ENCODE measurements at regions of chr19 and their contacts with region 1.

Region 1: DNA sequence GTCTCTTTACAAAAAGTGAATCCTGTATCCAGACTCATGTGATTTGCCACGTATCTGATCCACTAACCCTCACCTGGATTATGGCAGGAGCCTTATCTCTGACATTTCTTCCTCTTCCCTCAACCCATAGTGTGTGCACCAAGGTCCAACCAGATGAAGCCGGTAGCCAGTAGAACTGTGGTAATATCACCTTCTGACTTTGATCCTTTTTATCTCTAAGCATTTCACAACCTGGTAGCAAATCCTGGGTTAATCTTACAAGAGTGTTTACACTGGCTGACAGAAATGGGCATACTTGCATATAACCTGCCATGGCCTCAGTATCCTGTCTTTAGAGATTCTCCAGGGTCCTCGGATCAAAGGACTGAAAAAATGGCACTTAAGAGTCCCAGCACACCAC is 1.9 kb downstream of the ZNF417 start:
- DNase-seq: no peak
- ATAC-seq: no peak
- H3K4me3 ChIP-seq: peak overlapping the region; percentile 43
- H3K4me3 Mint-ChIP-seq: peak overlapping the region; percentile 93 to 99 (median 97)
- H3K27ac ChIP-seq: no peak overlapping the region
- H3K27ac Mint-ChIP-seq: peak overlapping the region in 5 of 9 donors; percentile 6 to 73 (median 47)
- H3K4me1 ChIP-seq: peaks cover 9 to 10% of the 10 kb centered on the region in 2 donors
- H3K4me1 Mint-ChIP-seq: peaks cover 21 to 39% (median 36%) of the 10 kb centered on the region in 7 donors
- H3K27me3 ChIP-seq: no peaks in the 10 kb centered on the region
- H3K27me3 Mint-ChIP-seq: no peaks in the 10 kb centered on the region

Region 2: DNA sequence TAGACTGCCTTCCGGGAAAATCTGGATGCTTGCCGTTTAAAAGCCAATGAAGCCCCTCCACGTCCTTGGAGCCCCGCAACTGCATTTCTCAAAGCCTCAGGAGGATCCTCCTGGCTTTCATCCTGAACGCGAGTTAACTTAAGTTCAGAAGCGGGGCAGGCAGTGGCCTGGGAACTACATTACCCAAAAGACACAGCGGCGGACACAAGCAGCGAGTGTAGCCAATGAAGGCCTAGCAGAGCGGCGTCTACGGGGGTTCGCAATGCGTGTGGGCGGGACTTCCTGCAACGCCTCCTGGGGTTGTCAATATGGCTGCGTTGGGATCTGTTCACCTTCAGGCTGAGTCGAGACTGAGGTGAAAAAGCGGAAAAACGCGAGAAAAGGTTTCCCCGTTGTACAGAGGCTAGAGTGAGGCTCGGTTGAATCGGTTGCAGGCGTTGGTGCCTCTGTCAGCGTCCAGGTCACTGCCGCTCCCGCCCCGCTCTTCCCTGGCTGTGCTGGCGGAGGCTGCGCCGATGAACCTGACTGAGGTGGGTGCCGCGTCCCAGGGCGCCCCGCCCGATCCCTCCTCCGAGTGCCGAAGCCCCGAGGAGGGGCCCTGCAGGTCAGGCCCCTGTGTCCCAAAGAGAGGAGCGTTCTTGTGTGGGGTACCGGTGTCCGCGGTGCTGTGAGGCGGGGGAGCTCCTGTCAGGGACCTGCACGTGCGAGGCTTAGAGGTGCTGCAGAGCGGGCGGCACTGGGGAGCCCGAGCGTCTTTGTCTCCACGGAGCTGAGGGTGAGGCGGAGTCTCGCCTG is 503.5 kb before region 1 on chr19 and contains the start of gene ZNF17:
- CTCF ChIA-PET with region 1: no interaction called
- POLR2A ChIA-PET with region 1: no interaction called
- intact Hi-C with region 1: loop called in 1 of 2 experiments (anchors 1 kb)
- DNase-seq: peak; percentile 72 to 95 (median 88)
- ATAC-seq: peak; percentile 100
- H3K4me3 ChIP-seq: peak within 1 kb of the TSS; percentile 80
- H3K4me3 Mint-ChIP-seq: peak within 1 kb of the TSS; percentile 85 to 97 (median 96)
- H3K27ac ChIP-seq: peak within 1 kb of the TSS; percentile 80
- H3K27ac Mint-ChIP-seq: peak within 1 kb of the TSS; percentile 78 to 96 (median 92)
- H3K4me1 ChIP-seq: peaks cover 3 to 8% of the 10 kb centered on the region in 2 donors
- H3K4me1 Mint-ChIP-seq: peaks cover 20 to 46% (median 34%) of the 10 kb centered on the region in 7 donors
- H3K27me3 ChIP-seq: no peaks in the 10 kb centered on the region
- H3K27me3 Mint-ChIP-seq: no peaks in the 10 kb centered on the region
- total RNA-seq, gene ZNF17: 9.3 to 27.8 (median 17.2) TPM

Region 3: DNA sequence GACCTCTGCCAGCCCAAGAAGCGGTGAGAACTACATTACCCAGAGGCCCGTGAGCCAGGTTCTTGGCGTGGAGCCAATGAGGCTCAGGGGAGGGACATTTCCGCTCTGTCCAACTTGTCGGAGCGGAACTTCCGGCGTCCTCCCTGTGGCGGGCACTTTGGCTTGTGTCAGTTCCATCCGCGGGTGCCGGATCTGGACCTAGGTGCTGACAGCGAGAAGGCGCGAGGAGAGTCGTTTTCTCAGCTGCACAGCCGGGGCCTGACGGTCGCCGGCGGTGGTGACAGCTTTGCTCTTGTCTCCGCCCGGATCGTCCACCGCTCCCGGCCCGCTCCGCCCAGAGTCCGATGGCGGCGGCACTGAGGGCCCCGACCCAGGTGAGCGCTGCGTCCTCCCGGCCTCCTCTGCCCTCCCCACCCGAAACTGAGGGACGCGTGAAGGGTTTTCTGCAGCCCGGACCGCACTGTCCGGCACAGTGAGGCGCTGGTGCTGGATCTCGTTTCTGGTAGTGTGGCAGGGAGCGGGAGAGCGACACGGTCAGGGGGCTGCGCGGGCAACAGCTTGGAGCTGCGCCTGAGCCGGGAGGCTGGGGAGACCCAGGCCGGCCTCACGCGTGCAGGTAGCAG is 314.7 kb before region 1 on chr19 and contains the start of gene ZNF530:
- CTCF ChIA-PET with region 1: no interaction called
- POLR2A ChIA-PET with region 1: no interaction called
- intact Hi-C with region 1: loop called in 1 of 2 experiments (anchors 1 kb)
- DNase-seq: peak; percentile 61 to 81 (median 73)
- ATAC-seq: peak; percentile 97
- H3K4me3 ChIP-seq: peak within 1 kb of the TSS; percentile 87
- H3K4me3 Mint-ChIP-seq: peak within 1 kb of the TSS; percentile 71 to 92 (median 89)
- H3K27ac ChIP-seq: peak within 1 kb of the TSS; percentile 69
- H3K27ac Mint-ChIP-seq: peak within 1 kb of the TSS in 8 of 9 donors; percentile 51 to 90 (median 81)
- H3K4me1 ChIP-seq: peaks cover 10% of the 10 kb centered on the region in 2 donors
- H3K4me1 Mint-ChIP-seq: peaks cover 14 to 28% (median 22%) of the 10 kb centered on the region in 7 donors
- H3K27me3 ChIP-seq: no peaks in the 10 kb centered on the region
- H3K27me3 Mint-ChIP-seq: no peaks in the 10 kb centered on the region
- total RNA-seq, gene ZNF530: 2.0 to 10.9 (median 6.2) TPM

Region 4: GRCh38 chr19:57746580-57747471 is 167.7 kb before region 1 on chr19 and contains the start of gene ZNF776:
- CTCF ChIA-PET with region 1: no interaction called
- POLR2A ChIA-PET with region 1: no interaction called
- intact Hi-C with region 1: loop called in 1 of 2 experiments (anchors 1 kb)
- DNase-seq: peak; percentile 40 to 90 (median 84)
- ATAC-seq: peak; percentile 99
- H3K4me3 ChIP-seq: peak within 1 kb of the TSS; percentile 86
- H3K4me3 Mint-ChIP-seq: peak within 1 kb of the TSS; percentile 91 to 99 (median 94)
- H3K27ac ChIP-seq: peak within 1 kb of the TSS; percentile 85
- H3K27ac Mint-ChIP-seq: peak within 1 kb of the TSS; percentile 81 to 99 (median 94)
- H3K4me1 ChIP-seq: peaks cover 6 to 16% of the 10 kb centered on the region in 2 donors
- H3K4me1 Mint-ChIP-seq: peaks cover 13 to 40% (median 26%) of the 10 kb centered on the region in 7 donors
- H3K27me3 ChIP-seq: no peaks in the 10 kb centered on the region
- H3K27me3 Mint-ChIP-seq: no peaks in the 10 kb centered on the region
- total RNA-seq, gene ZNF776: 18.9 to 52.3 (median 21.8) TPM

Region 5: GRCh38 chr19:57934820-57935665 is 20.5 kb after region 1 on chr19 and contains the start of gene ZNF418:
- CTCF ChIA-PET with region 1: no interaction called
- POLR2A ChIA-PET with region 1: no interaction called
- intact Hi-C with region 1: loop called in 1 of 2 experiments (anchors 2 kb)
- DNase-seq: peak in 7 of 9 donors; percentile 7 to 49 (median 42)
- ATAC-seq: peak; percentile 99
- H3K4me3 ChIP-seq: peak within 1 kb of the TSS; percentile 31
- H3K4me3 Mint-ChIP-seq: peak within 1 kb of the TSS; percentile 63 to 88 (median 85)
- H3K27ac ChIP-seq: peak within 1 kb of the TSS; percentile 69
- H3K27ac Mint-ChIP-seq: peak within 1 kb of the TSS in 8 of 9 donors; percentile 51 to 93 (median 85)
- H3K4me1 ChIP-seq: no peaks in the 10 kb centered on the region
- H3K4me1 Mint-ChIP-seq: peaks cover 0 to 9% (median 6%) of the 10 kb centered on the region in 7 donors
- H3K27me3 ChIP-seq: no peaks in the 10 kb centered on the region
- H3K27me3 Mint-ChIP-seq: peaks cover 0 to 17% (median 0%) of the 10 kb centered on the region in 5 donors
- total RNA-seq, gene ZNF418: 2.1 to 7.7 (median 6.0) TPM

Region 6: GRCh38 chr19:58380722-58381466 is 466.4 kb after region 1 on chr19 and contains the start of gene ZNF837:
- CTCF ChIA-PET with region 1: no interaction called
- POLR2A ChIA-PET with region 1: no interaction called
- intact Hi-C with region 1: loop called in 1 of 2 experiments (anchors 10 kb)
- DNase-seq: peak; percentile 90 to 100 (median 98)
- ATAC-seq: peak; percentile 93
- H3K4me3 ChIP-seq: peak within 1 kb of the TSS; percentile 97
- H3K4me3 Mint-ChIP-seq: peak within 1 kb of the TSS; percentile 87 to 98 (median 91)
- H3K27ac ChIP-seq: peak within 1 kb of the TSS; percentile 96
- H3K27ac Mint-ChIP-seq: peak within 1 kb of the TSS; percentile 93 to 97 (median 97)
- H3K4me1 ChIP-seq: peaks cover 21 to 25% of the 10 kb centered on the region in 2 donors
- H3K4me1 Mint-ChIP-seq: peaks cover 23 to 40% (median 34%) of the 10 kb centered on the region in 7 donors
- H3K27me3 ChIP-seq: no peaks in the 10 kb centered on the region
- H3K27me3 Mint-ChIP-seq: no peaks in the 10 kb centered on the region
- total RNA-seq, gene ZNF837: 1.4 to 4.3 (median 2.4) TPM